ENCODE measurements at regions of chr17 and their contacts with region 1.

Region 1: GRCh38 chr17:28357061-28357900 is at the start of gene POLDIP2:
- DNase-seq: peak; percentile 91 to 97 (median 95)
- ATAC-seq: peak; percentile 98
- H3K4me3 ChIP-seq: peak within 1 kb of the TSS; percentile 75
- H3K4me3 Mint-ChIP-seq: peak within 1 kb of the TSS; percentile 97
- H3K27ac ChIP-seq: peak within 1 kb of the TSS; percentile 80 to 83
- H3K27ac Mint-ChIP-seq: peak within 1 kb of the TSS; percentile 92
- H3K4me1 ChIP-seq: peaks cover 25% of the 10 kb centered on the region
- H3K4me1 Mint-ChIP-seq: peaks cover 35% of the 10 kb centered on the region
- H3K27me3 ChIP-seq: no peaks in the 10 kb centered on the region
- H3K27me3 Mint-ChIP-seq: no peaks in the 10 kb centered on the region
- CTCF ChIP-seq: no peak
- total RNA-seq, gene POLDIP2: 22.1 to 23.9 TPM

Region 2: GRCh38 chr17:28041068-28041843 is 316.0 kb before region 1 on chr17:
- CTCF ChIA-PET with region 1: no interaction called
- POLR2A ChIA-PET with region 1: interaction called, 3 read pairs
- intact Hi-C with region 1: loop called in 1 of 2 experiments (anchors 5 kb)
- DNase-seq: peak; percentile 97 to 100 (median 99)
- ATAC-seq: peak; percentile 92
- H3K4me3 ChIP-seq: peak overlapping the region; percentile 84
- H3K4me3 Mint-ChIP-seq: peak overlapping the region; percentile 93
- H3K27ac ChIP-seq: peak overlapping the region; percentile 52 to 69
- H3K27ac Mint-ChIP-seq: peak overlapping the region; percentile 82
- H3K4me1 ChIP-seq: peaks cover 30% of the 10 kb centered on the region
- H3K4me1 Mint-ChIP-seq: peaks cover 57% of the 10 kb centered on the region
- H3K27me3 ChIP-seq: no peaks in the 10 kb centered on the region
- H3K27me3 Mint-ChIP-seq: no peaks in the 10 kb centered on the region
- CTCF ChIP-seq: no peak

Region 3: GRCh38 chr17:28318759-28319660 is 38.3 kb before region 1 on chr17 and contains the start of gene TMEM97:
- CTCF ChIA-PET with region 1: interaction called, 3 read pairs
- POLR2A ChIA-PET with region 1: interaction called, 12 read pairs
- intact Hi-C with region 1: loop called in 1 of 2 experiments (anchors 2 kb)
- DNase-seq: peak; percentile 84 to 97 (median 92)
- ATAC-seq: peak; percentile 98
- H3K4me3 ChIP-seq: peak within 1 kb of the TSS; percentile 73
- H3K4me3 Mint-ChIP-seq: peak within 1 kb of the TSS; percentile 96
- H3K27ac ChIP-seq: no peak within 1 kb of the TSS
- H3K27ac Mint-ChIP-seq: peak within 1 kb of the TSS; percentile 79
- H3K4me1 ChIP-seq: peaks cover 20% of the 10 kb centered on the region
- H3K4me1 Mint-ChIP-seq: peaks cover 24% of the 10 kb centered on the region
- H3K27me3 ChIP-seq: no peaks in the 10 kb centered on the region
- H3K27me3 Mint-ChIP-seq: no peaks in the 10 kb centered on the region
- CTCF ChIP-seq: no peak
- total RNA-seq, gene TMEM97: 2.6 to 3.7 TPM

Region 4: DNA sequence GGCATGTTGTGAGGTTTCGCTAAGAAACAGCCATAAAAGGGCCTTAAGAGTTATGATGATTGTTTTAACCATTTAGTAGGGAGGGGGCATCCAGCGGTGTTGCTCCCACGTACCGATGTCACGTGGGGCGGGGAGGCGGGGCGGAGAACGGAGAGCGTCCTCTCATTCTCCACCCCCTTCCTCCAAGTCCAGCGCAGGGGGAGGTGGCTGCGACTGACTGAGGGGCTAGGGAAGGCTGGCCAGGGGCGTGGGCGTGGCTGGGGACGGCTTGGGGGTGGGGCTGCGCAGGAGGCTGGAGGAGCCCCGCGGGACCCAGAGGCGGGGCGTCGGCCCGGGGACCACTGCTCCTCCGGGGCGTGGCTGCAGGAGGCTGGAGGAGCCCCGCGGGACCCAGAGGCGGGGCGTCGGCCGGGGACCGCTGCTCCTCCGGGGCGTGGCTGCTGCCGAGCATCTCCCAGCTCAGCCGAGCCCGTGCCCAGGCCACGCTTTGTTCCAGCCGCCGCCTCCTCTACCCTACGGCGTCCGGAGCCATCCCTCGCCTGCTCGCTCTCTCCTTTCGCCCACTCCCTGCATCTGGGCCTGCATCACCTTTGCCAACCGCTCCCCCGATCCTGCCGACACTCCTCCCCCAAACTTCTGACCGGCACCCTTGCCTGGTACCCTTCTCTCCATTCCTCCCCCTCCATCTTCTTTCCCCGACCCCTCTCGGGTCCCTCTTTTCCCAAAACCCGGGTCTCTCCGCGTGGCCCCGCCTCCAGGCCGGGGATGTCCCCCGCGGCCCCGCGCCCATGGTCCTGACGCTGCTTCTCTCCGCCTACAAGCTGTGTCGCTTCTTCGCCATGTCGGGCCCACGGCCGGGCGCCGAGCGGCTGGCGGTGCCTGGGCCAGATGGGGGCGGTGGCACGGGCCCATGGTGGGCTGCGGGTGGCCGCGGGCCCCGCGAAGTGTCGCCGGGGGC is 14.2 kb after region 1 on chr17 and contains the start of gene SARM1:
- CTCF ChIA-PET with region 1: no interaction called
- POLR2A ChIA-PET with region 1: interaction called, 34 read pairs
- intact Hi-C with region 1: loop called in 1 of 2 experiments (anchors 2 kb)
- DNase-seq: peak; percentile 53 to 92 (median 74)
- ATAC-seq: peak; percentile 85
- H3K4me3 ChIP-seq: peak within 1 kb of the TSS; percentile 83
- H3K4me3 Mint-ChIP-seq: peak within 1 kb of the TSS; percentile 98
- H3K27ac ChIP-seq: peak within 1 kb of the TSS; percentile 59 to 91
- H3K27ac Mint-ChIP-seq: peak within 1 kb of the TSS; percentile 75
- H3K4me1 ChIP-seq: peaks cover 22% of the 10 kb centered on the region
- H3K4me1 Mint-ChIP-seq: peaks cover 26% of the 10 kb centered on the region
- H3K27me3 ChIP-seq: no peaks in the 10 kb centered on the region
- H3K27me3 Mint-ChIP-seq: no peaks in the 10 kb centered on the region
- CTCF ChIP-seq: no peak
- total RNA-seq, gene SARM1: 12.5 to 15.4 TPM

Region 5: GRCh38 chr17:28384281-28385036 is 27.2 kb after region 1 on chr17:
- CTCF ChIA-PET with region 1: no interaction called
- POLR2A ChIA-PET with region 1: interaction called, 24 read pairs
- intact Hi-C with region 1: no loop called
- DNase-seq: peak in 13 of 14 experiments; percentile 44 to 78 (median 58)
- ATAC-seq: peak; percentile 93
- H3K4me3 ChIP-seq: peak overlapping the region; percentile 94
- H3K4me3 Mint-ChIP-seq: peak overlapping the region; percentile 94
- H3K27ac ChIP-seq: peak overlapping the region in 1 of 2 donors; percentile 17
- H3K27ac Mint-ChIP-seq: peak overlapping the region; percentile 64
- H3K4me1 ChIP-seq: peaks cover 29% of the 10 kb centered on the region
- H3K4me1 Mint-ChIP-seq: peaks cover 36% of the 10 kb centered on the region
- H3K27me3 ChIP-seq: no peaks in the 10 kb centered on the region
- H3K27me3 Mint-ChIP-seq: peaks cover 8% of the 10 kb centered on the region
- CTCF ChIP-seq: no peak

Region 6: GRCh38 chr17:28710861-28711722 is 353.8 kb after region 1 on chr17:
- CTCF ChIA-PET with region 1: no interaction called
- POLR2A ChIA-PET with region 1: no interaction called
- intact Hi-C with region 1: loop called in 1 of 2 experiments (anchors 10 kb)
- DNase-seq: peak; percentile 78 to 93 (median 86)
- ATAC-seq: peak; percentile 92
- H3K4me3 ChIP-seq: peak overlapping the region; percentile 72
- H3K4me3 Mint-ChIP-seq: peak overlapping the region; percentile 94
- H3K27ac ChIP-seq: peak overlapping the region; percentile 68 to 73
- H3K27ac Mint-ChIP-seq: peak overlapping the region; percentile 87
- H3K4me1 ChIP-seq: peaks cover 18% of the 10 kb centered on the region
- H3K4me1 Mint-ChIP-seq: peaks cover 20% of the 10 kb centered on the region
- H3K27me3 ChIP-seq: peaks cover 4 to 5% of the 10 kb centered on the region in 2 experiments
- H3K27me3 Mint-ChIP-seq: peaks cover 17% of the 10 kb centered on the region
- CTCF ChIP-seq: no peak

Measured in CD4-positive, alpha-beta T cell (primary cell).